ENCODE measurements at regions of chr6 and their contacts with region 1.

Region 1: DNA sequence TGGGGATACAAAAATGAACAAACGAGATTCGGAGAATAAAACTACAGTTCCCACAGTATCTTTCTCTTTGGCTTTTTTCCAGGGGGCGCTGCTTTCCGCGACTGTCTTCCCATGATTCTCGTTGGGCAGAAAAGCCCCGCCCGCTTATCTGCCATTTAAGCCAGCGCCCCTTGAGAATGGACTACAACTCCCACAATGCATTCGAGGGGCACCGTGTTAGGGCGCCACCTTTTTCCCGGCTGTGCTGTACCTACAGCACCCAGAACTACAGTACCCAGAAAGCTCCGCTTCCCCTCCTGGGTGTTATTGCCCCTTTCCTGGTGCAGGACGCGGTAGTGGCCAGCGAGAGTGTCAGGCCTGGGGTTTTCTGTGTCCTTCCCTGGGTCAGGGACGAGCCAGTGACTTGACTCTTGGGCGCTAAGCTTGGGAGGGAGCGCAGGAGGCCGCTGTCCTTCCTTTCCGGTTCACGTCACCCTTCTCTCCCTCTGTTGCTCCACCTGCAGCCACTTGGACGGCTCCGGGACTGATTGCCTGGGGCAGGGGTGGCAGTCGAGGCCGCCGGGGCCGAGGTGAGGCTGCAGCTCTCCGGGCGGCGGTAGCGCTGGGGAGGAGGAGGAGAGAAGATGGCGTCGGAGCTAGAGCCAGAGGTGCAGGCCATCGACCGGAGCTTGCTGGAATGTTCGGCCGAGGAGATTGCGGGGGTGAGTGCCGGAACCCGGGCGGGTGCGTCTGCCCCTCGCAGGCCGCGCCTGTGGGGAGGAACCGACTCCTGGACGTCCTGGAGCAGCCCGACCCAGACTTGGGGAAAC is at the start of gene UBR2:
- DNase-seq: peak; percentile 99
- H3K4me3 ChIP-seq: peak within 1 kb of the TSS; percentile 88
- H3K27ac ChIP-seq: peak within 1 kb of the TSS; percentile 54
- H3K4me1 ChIP-seq: peaks cover 20% of the 10 kb centered on the region
- CTCF ChIP-seq: peak; percentile 75
- total RNA-seq, gene UBR2: 16.6 and 17.1 TPM in 2 replicates

Region 2: DNA sequence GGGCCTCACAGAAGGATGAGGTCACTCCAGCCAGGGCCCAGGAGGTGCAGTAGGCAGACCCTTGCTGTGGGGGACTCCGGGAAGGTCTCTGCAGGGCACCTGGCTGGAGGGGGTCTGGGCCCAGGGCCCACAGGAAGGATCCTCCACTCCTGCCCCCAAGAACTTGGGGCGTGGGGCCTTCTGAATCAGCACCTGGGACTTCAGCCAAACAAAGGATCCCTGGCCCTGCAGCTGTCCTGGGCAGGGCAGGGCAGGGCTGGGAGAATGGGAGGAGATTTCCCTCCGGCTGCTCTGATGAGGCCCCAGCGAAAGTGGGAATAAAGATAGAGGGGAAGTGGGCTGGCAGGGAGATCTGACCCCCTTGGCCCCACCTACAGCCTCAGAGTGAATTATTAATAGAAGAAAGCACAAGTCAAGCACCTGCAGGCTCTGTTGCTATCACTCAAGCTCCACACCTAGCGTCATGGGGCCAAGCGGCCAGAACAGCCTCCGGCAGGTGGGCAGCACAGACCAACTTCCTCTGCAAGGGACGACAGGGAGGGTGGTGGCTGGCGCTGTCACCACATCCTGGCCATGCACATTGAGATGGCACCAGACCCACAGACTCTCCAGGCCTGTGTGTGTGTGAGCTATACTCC is 284.6 kb before region 1 on chr6:
- CTCF ChIA-PET with region 1: no interaction called
- POLR2A ChIA-PET with region 1: no interaction called
- intact Hi-C with region 1: no loop called
- DNase-seq: peak; percentile 47
- H3K4me3 ChIP-seq: no peak overlapping the region
- H3K27ac ChIP-seq: no peak overlapping the region
- H3K4me1 ChIP-seq: peaks cover 10% of the 10 kb centered on the region
- CTCF ChIP-seq: no peak

Region 3: DNA sequence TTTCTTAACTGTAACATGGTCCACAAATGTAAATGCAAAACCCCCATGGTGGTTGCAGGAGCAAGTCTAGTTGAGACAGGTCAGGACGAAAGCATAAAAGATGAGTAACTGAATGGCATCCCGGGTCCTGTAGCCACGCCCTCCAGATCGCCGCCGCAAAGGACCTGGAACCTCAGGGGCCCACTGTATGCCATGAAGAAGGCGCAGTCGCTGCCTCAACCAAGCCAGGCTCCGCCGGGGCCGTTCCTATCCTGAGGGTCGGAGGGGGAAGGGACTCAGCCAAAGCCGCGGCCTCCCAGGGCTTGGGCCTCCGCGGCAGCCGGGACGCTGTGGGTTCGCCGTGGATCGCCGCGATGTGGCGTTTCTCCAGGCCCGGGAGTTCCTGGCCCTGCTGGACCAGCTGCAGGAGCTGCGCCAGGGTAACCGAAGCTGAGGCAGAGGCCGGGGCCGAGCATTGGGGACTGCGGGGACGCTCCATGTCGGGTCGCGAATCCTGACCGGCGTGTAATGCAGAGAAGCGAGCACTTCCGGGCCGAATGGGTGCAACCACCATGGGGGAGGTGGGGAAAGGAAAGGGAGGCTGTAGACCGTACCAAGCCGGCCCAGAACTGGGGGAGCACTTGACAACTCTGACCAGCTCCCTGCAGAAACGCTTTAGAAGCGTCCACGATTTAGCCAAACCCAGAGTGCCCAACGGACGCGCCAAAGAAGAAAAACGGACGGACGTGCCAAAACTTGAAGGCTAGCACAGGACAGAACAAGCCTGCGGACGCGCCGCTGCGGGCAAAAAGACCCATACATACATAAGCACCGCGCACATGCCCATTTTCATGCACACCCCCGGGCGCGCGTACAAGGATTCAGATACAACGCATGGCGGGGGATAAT is 326.7 kb after region 1 on chr6:
- CTCF ChIA-PET with region 1: no interaction called
- POLR2A ChIA-PET with region 1: no interaction called
- intact Hi-C with region 1: loop called (anchors 5 kb)
- DNase-seq: peak; percentile 97
- H3K4me3 ChIP-seq: peak overlapping the region; percentile 74
- H3K27ac ChIP-seq: peak overlapping the region; percentile 76
- H3K4me1 ChIP-seq: peaks cover 40% of the 10 kb centered on the region
- CTCF ChIP-seq: no peak